AG04450 (cell line): ENCODE measurements at regions of chrX and their contacts with region 1.

Region 1: DNA sequence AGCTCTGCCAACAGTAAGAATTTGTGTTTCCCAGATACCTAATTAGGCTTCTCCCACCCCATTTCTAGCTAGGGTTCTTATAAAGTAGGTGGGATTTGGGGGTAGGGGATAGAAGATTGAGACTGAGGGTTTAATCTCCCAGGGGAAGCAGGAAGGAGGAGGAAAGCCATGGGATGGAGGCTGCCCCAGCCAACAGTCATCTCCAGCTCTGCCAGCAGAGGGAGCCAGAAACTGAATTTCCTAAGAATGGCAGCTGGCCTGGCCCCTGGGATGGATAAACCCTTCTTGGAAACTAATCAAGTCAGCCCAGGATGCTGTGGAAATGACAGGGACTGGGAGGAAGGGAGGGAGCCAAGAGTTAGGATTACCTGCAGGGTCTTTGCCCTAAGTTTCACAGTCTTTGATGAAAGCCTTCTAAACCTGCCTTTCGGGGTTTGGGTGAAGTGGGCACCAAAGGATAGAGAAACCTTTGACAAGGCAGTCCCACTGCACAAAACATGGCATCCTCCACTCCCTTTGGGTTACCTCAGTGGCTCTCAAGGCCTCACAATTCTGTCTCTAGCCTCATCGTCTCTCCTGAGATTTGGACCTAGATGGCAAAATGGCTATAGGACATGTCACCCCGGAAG is 6.7 kb upstream of the ERCC6L start:
- DNase-seq: no peak
- H3K4me3 ChIP-seq: no peak overlapping the region
- H3K27ac ChIP-seq: no peak overlapping the region
- H3K27me3 ChIP-seq: no peaks in the 10 kb centered on the region
- CTCF ChIP-seq: peak; percentile 72

Region 2: DNA sequence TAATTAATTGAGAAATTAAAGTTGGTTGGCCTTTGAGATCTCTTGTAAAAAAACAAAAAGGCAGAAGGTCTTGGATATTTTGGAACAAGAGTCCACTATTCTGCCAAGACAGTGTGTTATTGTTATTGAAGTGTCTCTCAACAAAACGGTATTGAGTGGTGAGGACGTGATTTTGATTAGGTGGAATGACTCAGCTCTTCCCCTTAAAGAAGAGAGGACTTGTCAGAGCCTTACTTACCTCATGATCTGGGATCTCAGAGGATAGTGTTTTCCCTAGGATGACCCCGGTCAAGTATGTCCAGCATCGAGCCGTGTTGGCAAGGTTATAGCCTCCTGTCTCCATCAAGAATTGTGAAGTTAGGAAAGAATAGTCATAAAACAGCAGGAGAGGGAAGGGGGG is 216.2 kb after region 1 on chrX:
- CTCF ChIA-PET with region 1: no interaction called
- POLR2A ChIA-PET with region 1: no interaction called
- DNase-seq: no peak
- H3K4me3 ChIP-seq: no peak overlapping the region
- H3K27ac ChIP-seq: no peak overlapping the region
- H3K27me3 ChIP-seq: no peaks in the 10 kb centered on the region
- CTCF ChIP-seq: no peak

Region 3: GRCh38 chrX:72540318-72540717 is 294.7 kb after region 1 on chrX:
- CTCF ChIA-PET with region 1: interaction called, 12 read pairs
- POLR2A ChIA-PET with region 1: no interaction called
- DNase-seq: peak; percentile 6
- H3K4me3 ChIP-seq: no peak overlapping the region
- H3K27ac ChIP-seq: no peak overlapping the region
- H3K27me3 ChIP-seq: no peaks in the 10 kb centered on the region
- CTCF ChIP-seq: peak; percentile 35; the same call in 1 of the 2 replicates